Activated CD4-positive, alpha-beta T cell treated with anti-CD3 and anti-CD28 coated beads, Interleukin-2, amount 10 ng/mL, durations not matched to agents 7 days and 5 days (primary cell): ENCODE measurements at regions of chr16 and their contacts with region 1.

Region 1: GRCh38 chr16:27169511-27170071 is 33.7 kb upstream of the KDM8 start:
- DNase-seq: peak; percentile 77
- H3K4me3 Mint-ChIP-seq: peak overlapping the region; percentile 28
- H3K27ac Mint-ChIP-seq: peak overlapping the region; percentile 82
- H3K4me1 Mint-ChIP-seq: peaks cover 64% of the 10 kb centered on the region
- H3K27me3 Mint-ChIP-seq: no peaks in the 10 kb centered on the region

Region 2: GRCh38 chr16:27152121-27152520 is 17.5 kb before region 1 on chr16:
- CTCF ChIA-PET with region 1: interaction called, 10 read pairs
- POLR2A ChIA-PET with region 1: no interaction called
- DNase-seq: no peak
- H3K4me3 Mint-ChIP-seq: no peak overlapping the region
- H3K27ac Mint-ChIP-seq: no peak overlapping the region
- H3K4me1 Mint-ChIP-seq: peaks cover 19% of the 10 kb centered on the region
- H3K27me3 Mint-ChIP-seq: no peaks in the 10 kb centered on the region

Region 3: DNA sequence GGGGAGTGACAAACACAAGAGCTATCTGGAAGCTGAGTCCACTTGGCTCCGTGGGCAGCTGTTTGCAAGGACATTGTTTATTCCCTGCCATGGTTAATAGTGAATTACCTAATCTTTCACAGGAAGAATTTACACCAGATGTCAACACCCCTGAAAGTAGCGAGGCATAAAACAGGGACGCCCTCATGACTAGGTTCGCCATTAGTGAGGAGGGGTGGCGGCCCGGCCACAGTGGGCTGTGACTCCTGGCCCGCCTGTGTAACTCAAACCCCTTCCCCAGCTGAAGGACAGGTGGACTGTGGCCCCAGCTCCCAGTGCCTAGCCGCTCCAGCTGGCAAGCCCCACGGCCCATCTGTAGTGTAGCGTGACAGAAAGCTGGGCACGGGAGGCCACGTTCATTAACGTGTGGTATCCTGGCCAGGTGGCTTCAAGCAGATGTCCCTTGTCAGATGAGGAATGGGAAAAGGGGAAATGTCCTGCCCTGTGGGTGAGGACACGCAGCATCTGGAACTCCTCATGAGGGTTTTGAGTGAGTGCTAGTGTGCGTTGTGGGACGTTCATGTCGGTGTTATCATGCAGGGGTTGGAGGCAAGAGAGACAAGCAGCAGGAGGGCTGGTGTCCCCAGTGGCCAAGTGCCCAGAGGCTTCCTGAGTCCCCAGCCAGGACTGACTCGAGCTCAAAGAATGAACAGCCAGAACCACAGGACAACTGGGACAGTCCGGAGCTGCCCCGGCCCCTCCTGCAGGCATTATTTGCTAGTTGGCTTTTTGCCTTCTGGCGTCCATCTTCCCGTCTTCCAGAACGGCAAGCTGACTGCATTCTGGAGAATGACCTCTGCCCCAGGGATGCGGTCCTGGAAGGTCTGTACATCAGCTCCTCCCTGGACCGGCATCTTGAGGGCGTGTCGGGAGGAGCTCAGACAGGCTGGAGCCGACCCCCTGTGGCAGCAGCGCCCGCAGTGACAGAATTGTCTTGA is 52.9 kb after region 1 on chr16:
- CTCF ChIA-PET with region 1: no interaction called
- POLR2A ChIA-PET with region 1: no interaction called
- DNase-seq: no peak
- H3K4me3 Mint-ChIP-seq: no peak overlapping the region
- H3K27ac Mint-ChIP-seq: peak overlapping the region; percentile 5
- H3K4me1 Mint-ChIP-seq: peaks cover 26% of the 10 kb centered on the region
- H3K27me3 Mint-ChIP-seq: no peaks in the 10 kb centered on the region

Region 4: DNA sequence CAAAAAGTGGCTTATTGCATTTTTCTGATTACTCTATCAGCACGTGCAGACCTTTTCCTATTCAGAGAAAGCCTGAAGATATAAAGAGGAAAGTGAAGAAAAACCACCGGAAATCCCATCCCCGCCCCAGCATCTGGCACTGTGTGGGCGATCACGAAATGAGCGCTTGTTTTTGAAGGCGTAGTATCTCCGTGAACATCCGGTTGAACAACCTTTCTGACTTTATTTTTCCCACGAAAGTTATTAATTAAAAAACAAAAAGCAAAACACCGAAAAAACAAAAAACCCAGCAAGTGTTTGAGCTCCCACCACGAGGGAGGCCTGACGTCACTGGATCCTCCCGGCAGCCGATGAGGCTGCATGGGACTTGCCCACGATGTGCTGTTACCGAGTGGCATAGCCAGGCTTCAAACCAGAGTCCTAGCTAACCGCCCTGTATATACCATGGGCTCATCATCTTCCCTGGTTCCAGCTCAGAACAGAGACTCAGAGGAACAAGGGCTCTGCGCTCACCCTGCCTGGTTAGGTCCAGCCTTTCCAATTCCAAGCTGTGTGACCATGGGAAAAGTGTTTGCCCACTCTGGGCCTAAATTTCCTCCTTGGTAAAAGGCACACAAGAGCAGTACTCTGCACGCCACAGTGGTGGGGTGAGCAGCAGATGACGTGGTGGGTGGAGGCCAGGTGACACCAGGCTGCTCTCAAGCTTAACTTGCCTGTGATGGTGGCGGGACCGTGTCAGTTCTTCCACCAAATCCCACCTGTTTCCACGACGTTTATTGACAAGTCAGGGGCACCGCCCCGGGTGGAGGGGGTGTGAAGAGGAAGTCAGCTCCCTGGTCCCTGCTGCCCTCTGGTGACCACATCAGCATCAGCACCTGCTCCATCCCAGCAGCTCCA is 198.1 kb after region 1 on chr16:
- CTCF ChIA-PET with region 1: interaction called, 12 read pairs
- POLR2A ChIA-PET with region 1: no interaction called
- DNase-seq: peak; percentile 90
- H3K4me3 Mint-ChIP-seq: peak overlapping the region; percentile 58
- H3K27ac Mint-ChIP-seq: peak overlapping the region; percentile 98
- H3K4me1 Mint-ChIP-seq: peaks cover 80% of the 10 kb centered on the region
- H3K27me3 Mint-ChIP-seq: no peaks in the 10 kb centered on the region